ENCODE measurements at regions of chr14 and their contacts with region 1.

Region 1: DNA sequence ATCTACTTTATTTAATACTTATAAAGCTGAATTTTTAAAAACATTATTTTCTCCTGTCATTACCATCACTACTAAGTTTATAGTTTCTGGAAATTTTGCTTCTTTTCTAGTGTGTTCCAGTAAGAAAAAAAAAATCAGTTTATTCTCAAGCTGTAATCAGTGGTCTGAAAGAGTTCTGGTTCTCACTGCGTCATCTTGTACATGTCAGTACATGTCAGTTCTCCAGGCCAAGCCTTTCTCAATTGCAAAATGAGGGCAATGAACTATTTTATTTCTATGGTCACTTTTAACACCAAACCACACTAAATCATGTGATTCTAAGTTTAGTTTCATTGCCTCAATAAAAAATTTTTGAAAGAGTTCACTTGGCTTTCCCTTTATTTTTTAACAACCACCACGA is 468.9 kb upstream of the LRFN5 start:
- DNase-seq: no peak
- ATAC-seq: no peak

Region 2: GRCh38 chr14:40878507-40878906 is 259.2 kb before region 1 on chr14:
- intact Hi-C with region 1: no loop called
- DNase-seq: no peak
- ATAC-seq: no peak

Region 3: DNA sequence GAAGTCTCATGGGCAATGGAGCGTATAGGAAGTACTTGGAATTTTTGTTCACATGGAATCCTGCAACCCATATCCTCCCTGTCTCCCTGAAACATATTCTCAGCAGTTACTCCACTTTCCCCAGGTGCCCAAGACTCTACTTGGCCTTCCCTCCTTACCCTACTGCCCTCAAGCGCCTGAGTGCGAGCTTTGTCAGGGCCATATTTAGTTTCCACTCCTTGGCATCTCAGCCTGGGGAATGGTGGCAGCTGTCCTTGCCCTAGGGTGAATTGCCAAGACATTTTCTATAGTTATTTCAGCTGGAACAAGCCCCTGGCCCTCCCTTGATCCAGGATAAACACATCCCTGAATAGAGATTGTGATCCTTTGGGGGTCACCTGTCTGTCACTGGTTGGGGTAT is 100.4 kb before region 1 on chr14:
- intact Hi-C with region 1: no loop called
- DNase-seq: no peak
- ATAC-seq: no peak

Region 4: DNA sequence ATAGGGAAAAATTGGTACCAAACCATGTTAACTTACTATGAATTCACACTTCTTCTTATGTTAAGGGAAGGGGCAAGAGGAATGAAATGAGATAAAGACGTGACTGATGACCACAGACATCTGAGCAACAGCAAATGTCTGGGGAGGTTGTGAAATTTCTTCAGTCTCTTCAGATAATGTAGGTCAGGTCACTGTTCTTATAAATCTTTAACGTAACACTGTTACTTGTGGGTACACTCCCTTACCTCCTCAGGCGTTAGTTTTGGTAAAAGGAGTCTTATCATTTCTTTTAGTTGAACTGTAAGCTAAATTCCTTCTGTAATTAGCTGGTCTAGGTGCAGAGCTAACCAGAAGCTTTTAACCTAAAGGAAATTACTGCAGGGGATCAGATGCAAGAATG is 64.0 kb after region 1 on chr14:
- intact Hi-C with region 1: loop called in 1 of 2 experiments (anchors 2 kb)
- DNase-seq: no peak
- ATAC-seq: no peak